Heart left ventricle (tissue), 16 donors: ENCODE measurements at regions of chr7 and their contacts with region 1.

Region 1: DNA sequence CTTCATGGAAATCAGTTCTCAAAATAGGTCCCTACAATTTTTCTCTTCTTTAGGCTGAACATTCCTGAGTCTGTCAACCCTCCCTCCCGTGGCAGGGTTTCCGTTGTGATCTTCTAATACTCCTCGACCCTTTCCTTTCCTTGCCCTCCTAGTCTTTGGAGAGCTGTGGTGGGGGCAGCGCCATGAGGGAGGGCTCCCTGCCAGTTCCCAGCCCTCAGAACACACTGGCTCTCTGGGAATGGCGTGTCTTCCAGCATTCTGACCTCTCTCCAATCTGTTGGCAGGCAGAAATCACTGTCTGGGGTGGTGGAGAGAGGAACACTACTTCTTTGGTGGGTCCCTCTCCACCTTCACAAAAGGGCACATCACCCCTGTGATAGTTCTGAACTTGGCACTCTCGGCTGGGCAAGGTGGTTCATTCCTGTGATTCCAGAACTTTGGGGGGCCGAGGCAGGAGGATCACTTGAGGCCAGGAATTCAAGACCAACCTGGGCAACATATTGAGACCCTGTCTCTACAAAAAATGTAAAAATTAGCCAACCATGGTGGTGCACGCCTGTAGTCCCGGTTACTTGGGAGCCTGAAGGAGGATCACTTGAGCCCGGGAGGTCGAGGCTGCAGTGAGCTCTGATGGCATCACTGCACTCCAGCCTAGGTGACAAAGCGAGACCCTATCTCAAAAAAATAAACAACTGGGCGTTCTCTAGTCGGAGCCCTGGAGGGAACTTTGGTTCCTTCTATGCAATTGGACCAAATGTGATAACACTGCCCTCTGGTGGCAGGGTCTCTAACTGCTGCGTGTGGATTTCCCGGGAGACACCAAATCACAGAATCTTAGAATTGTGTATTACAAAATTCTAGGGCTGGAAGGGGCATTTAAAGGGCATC is 13.1 kb upstream of the ARPC1A start:
- DNase-seq: peak in 4 of 5 donors; percentile 46 to 67 (median 62)
- ATAC-seq: peak; percentile 47 to 81 (median 74)
- H3K4me3 ChIP-seq: peak overlapping the region in 1 of 12 donors; percentile 33
- H3K27ac ChIP-seq: no peak overlapping the region
- H3K4me1 ChIP-seq: peaks cover 0 to 8% (median 0%) of the 10 kb centered on the region in 12 donors
- H3K27me3 ChIP-seq: no peaks in the 10 kb centered on the region
- CTCF ChIP-seq: peak; percentile 83 to 97 (median 91)
- POLR2A ChIP-seq: no peak

Region 2: DNA sequence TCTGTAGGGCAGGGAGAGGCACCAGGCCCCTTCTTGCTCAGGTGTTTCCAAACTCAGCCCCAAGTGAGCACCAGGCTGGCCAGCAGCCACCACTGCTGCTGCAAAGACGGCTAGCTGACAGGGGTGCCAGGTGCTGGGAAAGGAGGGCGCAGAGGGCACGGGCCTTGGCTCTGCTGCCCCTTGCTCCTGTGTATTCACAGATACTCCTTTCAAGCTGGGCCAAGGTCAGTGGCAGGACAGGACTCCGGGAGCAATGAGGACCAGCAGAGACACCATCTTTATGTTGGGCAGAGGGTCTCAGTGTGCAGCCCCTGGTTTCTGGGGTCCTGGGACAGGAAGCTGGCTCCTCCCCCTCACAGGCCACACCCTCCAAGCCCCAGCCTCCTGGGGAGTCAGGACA is 278.8 kb before region 1 on chr7:
- intact Hi-C with region 1: loop called in 1 of 10 experiments (anchors 2 kb)
- DNase-seq: no peak
- ATAC-seq: no peak
- H3K4me3 ChIP-seq: no peak overlapping the region
- H3K27ac ChIP-seq: peak overlapping the region in 2 of 12 donors; percentile 2 to 14
- H3K4me1 ChIP-seq: peaks cover 0 to 41% (median 12%) of the 10 kb centered on the region in 12 donors
- H3K27me3 ChIP-seq: no peaks in the 10 kb centered on the region
- CTCF ChIP-seq: no peak
- POLR2A ChIP-seq: no peak

Region 3: DNA sequence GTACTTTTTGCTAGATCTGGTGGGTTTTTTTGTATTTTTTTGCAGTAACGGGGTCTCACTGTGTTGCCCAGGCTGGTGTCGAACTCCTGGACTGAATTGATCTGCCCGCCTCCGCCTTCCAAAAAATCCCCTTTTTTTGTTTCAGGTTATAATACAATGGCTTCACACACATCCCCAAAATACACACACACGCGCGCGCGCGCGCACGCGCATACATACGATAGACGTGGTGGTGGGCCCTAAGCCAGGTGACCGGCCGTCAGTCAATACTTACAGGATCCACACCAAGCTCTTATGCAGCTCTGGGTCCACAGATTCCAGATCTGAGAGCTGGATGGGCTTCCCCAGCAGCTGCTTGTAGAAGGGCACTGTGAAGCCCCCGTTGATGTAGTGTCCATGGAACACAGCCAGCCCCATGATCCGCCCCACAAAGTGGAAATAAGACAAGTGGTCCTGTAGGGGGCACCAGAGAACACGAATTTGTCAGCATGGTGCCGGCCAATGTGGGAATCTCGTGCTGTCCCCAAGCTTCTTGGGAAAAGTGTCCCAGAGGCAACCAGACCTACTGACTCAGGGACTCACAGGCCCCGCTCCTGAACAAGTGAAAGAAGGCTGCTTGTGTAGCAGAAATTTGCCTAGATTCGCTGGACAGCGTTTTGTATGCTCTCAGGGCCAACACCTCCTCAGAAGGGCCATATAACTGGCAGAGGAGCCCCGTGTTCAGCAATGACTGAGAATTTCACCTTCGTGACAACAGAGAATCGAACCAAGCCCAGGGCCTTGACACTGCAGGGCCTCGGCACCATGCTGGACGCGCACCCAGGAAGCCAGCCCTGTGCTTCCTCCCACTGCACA is 272.2 kb before region 1 on chr7:
- intact Hi-C with region 1: loop called (anchors 1 to 2 kb)
- DNase-seq: peak; percentile 78 to 91 (median 85)
- ATAC-seq: peak; percentile 74 to 84 (median 82)
- H3K4me3 ChIP-seq: no peak overlapping the region
- H3K27ac ChIP-seq: peak overlapping the region in 11 of 12 donors; percentile 32 to 70 (median 46)
- H3K4me1 ChIP-seq: peaks cover 0 to 34% (median 4%) of the 10 kb centered on the region in 12 donors
- H3K27me3 ChIP-seq: no peaks in the 10 kb centered on the region
- CTCF ChIP-seq: peak; percentile 68 to 85 (median 76)
- POLR2A ChIP-seq: no peak

Region 4: GRCh38 chr7:99171731-99172130 is 140.8 kb before region 1 on chr7:
- intact Hi-C with region 1: loop called in 1 of 10 experiments (anchors 10 kb)
- DNase-seq: no peak
- ATAC-seq: no peak
- H3K4me3 ChIP-seq: no peak overlapping the region
- H3K27ac ChIP-seq: no peak overlapping the region
- H3K4me1 ChIP-seq: no peaks in the 10 kb centered on the region
- H3K27me3 ChIP-seq: peaks cover 0 to 4% (median 0%) of the 10 kb centered on the region in 9 donors
- CTCF ChIP-seq: no peak
- POLR2A ChIP-seq: no peak

Region 5: DNA sequence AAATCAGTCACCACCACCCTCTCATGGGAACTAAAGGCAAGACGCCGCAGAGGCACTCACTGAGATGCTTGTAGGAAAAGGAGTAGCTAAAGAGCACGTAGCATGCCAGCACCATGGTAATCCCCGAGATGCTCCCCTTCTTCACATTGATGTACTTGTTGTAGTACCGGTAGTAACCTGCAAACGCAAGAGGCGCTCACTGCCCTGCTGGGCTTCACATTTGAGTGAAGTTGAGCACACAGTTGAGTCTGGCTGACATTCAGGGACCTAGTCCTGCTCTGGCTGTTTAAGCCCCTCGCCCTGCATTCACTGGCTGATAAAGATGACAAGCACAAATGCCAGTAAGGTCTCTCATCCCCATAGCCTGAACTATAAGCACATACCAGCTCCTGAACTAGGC is 146.5 kb after region 1 on chr7:
- intact Hi-C with region 1: no loop called
- DNase-seq: no peak
- ATAC-seq: no peak
- H3K4me3 ChIP-seq: no peak overlapping the region
- H3K27ac ChIP-seq: no peak overlapping the region
- H3K4me1 ChIP-seq: peaks cover 8 to 48% (median 23%) of the 10 kb centered on the region in 12 donors
- H3K27me3 ChIP-seq: no peaks in the 10 kb centered on the region
- CTCF ChIP-seq: peak in 3 of 12 donors; percentile 19 to 34 (median 23)
- POLR2A ChIP-seq: no peak